Aorta (tissue), 5 donors: ENCODE measurements at regions of chr15 and their contacts with region 1.

Region 1: DNA sequence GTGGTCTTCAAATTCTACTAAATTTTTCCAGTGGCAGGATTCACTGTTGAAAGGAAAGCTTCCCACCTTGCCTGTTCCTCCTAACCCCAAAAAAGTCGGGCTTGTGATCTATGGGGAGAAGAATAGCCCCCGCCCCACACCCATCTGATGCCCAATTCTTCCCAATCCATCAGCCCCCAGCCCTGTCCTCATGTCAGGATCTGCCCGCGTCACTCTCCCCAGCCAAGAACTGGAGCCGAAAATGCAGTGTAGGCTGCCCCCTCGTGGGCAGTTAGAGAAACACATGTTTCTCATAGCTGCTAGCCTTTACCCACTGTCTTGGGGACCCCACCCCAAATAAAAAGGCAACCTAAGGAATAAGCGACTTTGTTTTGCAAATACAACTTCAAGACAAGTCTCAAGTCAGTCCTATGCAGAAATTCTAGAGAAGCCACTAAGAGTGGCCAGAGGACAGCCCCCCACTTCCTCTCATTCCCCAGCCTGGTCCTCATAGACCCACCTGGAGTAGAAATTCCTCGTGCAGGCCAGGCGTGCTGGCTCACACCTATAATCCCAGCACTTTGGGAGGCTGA is 13.0 kb upstream of the CSK start:
- DNase-seq: peak; percentile 69 to 87
- ATAC-seq: peak; percentile 78
- H3K4me3 ChIP-seq: no peak overlapping the region
- H3K27ac ChIP-seq: no peak overlapping the region
- H3K4me1 ChIP-seq: no peaks in the 10 kb centered on the region
- H3K27me3 ChIP-seq: no peaks in the 10 kb centered on the region

Region 2: DNA sequence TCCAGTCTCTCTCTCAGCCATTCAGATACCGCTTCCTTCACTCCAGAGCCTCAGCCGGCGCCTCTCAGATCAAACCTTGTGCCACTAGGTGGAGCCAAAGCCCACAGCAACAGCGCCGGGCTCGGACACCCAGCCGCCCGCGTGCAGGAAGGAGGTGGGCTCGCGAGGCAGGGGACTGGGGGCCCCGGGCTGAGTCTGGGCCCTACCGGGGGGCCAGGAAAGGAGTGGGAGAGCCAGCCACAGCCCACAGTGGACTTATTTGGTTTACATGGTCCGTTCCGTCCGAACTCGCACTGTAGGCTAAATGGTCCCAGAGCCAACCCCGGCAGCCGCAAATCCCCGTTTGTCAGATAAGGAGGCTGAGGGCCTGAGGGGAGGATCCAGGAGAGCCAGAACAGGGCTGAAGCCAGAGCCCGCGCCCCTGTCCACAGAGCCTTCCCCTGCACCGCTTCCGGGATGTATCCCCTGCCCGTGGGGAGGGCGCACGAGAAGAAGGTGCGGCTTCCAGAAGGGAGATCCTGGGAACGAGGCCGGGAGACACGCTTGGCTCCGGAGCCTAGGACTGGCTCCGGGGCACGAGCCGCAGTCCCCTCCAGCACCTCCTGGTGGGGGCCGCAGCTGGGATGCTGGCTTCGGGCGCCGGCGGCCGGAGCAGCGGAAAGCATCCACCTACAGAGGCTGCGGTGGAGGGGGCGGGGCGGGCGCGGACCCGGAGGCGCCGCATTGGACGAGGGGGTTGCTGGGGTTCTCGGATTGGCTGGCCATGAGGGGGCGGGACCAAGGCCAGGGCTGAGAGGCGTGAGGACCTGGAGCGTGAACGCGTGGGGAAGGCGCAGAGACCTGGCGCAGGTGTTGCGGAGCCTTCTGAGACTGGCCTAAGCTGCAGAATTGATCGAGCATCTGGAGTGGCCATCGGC is 394.9 kb before region 1 on chr15:
- intact Hi-C with region 1: loop called (anchors 2 to 10 kb)
- DNase-seq: peak; percentile 95 to 97
- ATAC-seq: peak; percentile 98
- H3K4me3 ChIP-seq: peak overlapping the region in 1 of 2 donors; percentile 29
- H3K27ac ChIP-seq: no peak overlapping the region
- H3K4me1 ChIP-seq: no peaks in the 10 kb centered on the region
- H3K27me3 ChIP-seq: no peaks in the 10 kb centered on the region

Region 3: DNA sequence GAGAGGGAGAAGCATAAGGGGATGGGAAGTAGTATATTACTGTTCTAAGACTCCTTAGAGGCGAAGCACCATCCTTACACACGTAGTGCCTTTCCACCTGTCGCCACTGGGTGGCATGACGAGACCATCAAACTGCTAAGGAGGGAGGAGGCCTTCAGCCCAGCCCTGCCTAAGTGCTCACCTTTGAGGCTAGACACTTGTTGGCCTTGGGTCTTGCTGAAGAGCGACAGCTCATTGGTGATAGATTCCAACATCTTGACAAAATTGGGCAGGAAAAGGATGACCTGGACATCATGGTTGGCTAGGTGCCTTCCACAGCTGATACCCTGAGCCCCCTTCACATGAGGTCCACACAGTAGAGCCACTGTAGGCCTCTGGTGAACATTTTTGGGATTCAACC is 133.6 kb before region 1 on chr15:
- intact Hi-C with region 1: loop called (anchors 1 to 2 kb)
- DNase-seq: peak in 1 of 2 donors; percentile 88
- ATAC-seq: peak; percentile 75
- H3K4me3 ChIP-seq: no peak overlapping the region
- H3K27ac ChIP-seq: no peak overlapping the region
- H3K4me1 ChIP-seq: no peaks in the 10 kb centered on the region
- H3K27me3 ChIP-seq: no peaks in the 10 kb centered on the region

Region 4: GRCh38 chr15:74716644-74717043 is 52.2 kb before region 1 on chr15:
- intact Hi-C with region 1: no loop called
- DNase-seq: no peak
- ATAC-seq: no peak
- H3K4me3 ChIP-seq: no peak overlapping the region
- H3K27ac ChIP-seq: no peak overlapping the region
- H3K4me1 ChIP-seq: no peaks in the 10 kb centered on the region
- H3K27me3 ChIP-seq: no peaks in the 10 kb centered on the region

Region 5: DNA sequence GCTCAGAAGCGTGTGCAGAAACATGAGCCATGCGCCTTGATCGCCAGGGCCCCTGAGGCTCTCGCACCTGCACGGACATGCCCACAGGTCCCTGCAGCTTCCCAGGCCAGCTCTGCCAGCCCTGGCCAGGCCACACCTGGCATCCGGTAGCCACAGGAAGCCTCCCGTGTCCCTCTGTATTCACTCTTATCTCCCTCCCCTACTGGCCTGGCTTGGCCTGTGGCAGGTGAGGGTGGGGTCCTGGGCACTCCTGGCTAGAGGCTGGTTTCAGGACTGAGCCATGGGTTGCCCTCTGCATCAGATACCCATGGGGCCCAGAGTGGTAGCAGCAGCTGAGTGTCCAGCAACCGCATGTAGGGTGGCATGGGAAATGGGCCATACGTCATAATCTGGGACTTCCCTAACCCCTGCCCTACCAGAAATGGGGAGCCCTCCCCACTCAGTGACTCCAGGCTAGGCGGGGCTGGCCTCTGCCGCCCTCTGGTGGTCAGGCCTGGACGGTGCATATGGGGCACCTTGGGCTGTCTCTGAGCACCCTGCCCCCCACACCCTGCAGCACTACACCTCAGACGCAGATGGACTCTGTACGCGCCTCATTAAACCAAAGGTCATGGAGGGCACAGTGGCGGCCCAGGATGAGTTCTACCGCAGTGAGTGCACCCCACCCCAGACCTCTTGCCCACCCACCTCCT is 31.1 kb after region 1 on chr15:
- intact Hi-C with region 1: loop called (anchors 5 kb)
- DNase-seq: peak; percentile 86 to 92
- ATAC-seq: peak; percentile 89
- H3K4me3 ChIP-seq: no peak overlapping the region
- H3K27ac ChIP-seq: no peak overlapping the region
- H3K4me1 ChIP-seq: no peaks in the 10 kb centered on the region
- H3K27me3 ChIP-seq: no peaks in the 10 kb centered on the region

Region 6: DNA sequence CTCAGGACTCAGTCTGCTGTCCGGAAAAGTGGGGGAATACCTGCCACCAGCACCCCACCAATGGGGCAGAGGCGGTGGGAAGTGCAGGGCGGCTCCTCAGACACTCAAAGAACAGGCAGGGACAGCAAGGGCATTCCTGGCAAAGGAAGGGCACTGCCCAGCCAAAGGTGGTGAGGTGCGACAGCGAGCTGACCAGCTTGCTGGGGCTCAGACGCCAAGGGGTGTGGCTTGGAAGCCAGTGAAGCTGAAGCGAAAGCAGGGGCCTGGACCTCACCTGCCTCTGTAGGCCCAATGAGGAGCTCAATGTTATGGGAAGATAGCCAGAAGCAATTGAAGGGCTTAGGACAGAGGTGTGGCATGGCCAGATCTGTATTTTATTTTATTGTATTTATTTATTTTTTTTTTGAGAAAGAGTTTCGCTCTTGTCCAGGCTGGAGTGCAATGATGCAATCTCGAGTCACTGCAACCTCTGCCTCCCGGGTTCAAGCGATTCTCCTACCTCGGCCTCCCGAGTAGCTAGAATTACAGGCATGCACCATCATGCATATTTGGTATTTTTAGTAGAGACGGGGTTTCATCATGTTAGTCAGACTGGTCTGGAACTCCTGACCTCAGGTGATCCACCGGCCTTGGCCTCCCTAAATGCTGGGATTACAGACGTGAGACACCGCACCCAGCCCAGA is 39.4 kb after region 1 on chr15:
- intact Hi-C with region 1: loop called (anchors 5 kb)
- DNase-seq: no peak
- ATAC-seq: no peak
- H3K4me3 ChIP-seq: no peak overlapping the region
- H3K27ac ChIP-seq: no peak overlapping the region
- H3K4me1 ChIP-seq: no peaks in the 10 kb centered on the region
- H3K27me3 ChIP-seq: no peaks in the 10 kb centered on the region

Region 7: GRCh38 chr15:74857082-74857655 is 88.3 kb after region 1 on chr15:
- intact Hi-C with region 1: no loop called
- DNase-seq: no peak
- ATAC-seq: no peak
- H3K4me3 ChIP-seq: no peak overlapping the region
- H3K27ac ChIP-seq: no peak overlapping the region
- H3K4me1 ChIP-seq: no peaks in the 10 kb centered on the region
- H3K27me3 ChIP-seq: no peaks in the 10 kb centered on the region

Region 8: DNA sequence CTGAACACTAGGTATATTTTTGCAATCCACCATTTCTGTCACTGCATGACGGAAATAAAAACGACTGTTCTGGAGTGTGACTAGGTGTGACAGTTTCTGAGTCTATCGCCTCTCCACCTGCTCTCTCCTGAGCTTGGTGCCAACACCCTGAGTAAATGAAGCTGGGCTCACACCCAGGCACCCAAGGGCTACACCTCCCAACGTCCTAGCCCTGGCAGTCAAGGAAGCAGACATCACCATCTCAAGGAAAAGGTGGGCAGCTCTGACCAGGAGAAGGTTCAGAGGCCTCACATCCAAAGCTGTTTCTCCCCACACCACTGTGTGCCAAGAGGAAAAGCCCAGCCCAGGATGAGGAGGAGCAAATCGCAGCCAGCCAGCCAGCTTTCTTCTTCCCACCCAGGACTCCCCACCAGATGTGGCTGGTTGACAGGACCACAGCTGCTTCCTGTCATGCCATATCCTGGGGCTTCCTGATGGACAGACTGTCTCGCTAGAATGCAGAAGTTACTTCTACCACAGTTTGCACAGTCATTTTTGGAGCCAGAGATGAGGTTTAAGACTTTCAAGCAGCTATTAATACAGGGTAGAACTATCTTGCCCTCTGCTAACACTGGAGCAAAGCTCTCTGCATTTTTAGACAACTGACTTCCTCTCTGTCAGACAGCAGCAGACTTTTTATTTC is 101.0 kb after region 1 on chr15:
- intact Hi-C with region 1: no loop called
- DNase-seq: peak in 1 of 2 donors; percentile 87
- ATAC-seq: no peak
- H3K4me3 ChIP-seq: no peak overlapping the region
- H3K27ac ChIP-seq: peak overlapping the region in 1 of 2 donors; percentile 77
- H3K4me1 ChIP-seq: peaks cover 0 to 2% of the 10 kb centered on the region in 2 donors
- H3K27me3 ChIP-seq: no peaks in the 10 kb centered on the region

Region 9: GRCh38 chr15:74897300-74897701 is 128.4 kb after region 1 on chr15:
- intact Hi-C with region 1: loop called in 1 of 2 experiments (anchors 5 kb)
- DNase-seq: no peak
- ATAC-seq: no peak
- H3K4me3 ChIP-seq: no peak overlapping the region
- H3K27ac ChIP-seq: no peak overlapping the region
- H3K4me1 ChIP-seq: no peaks in the 10 kb centered on the region
- H3K27me3 ChIP-seq: no peaks in the 10 kb centered on the region

Region 10: GRCh38 chr15:74950078-74951000 is 181.5 kb after region 1 on chr15:
- intact Hi-C with region 1: loop called (anchors 2 to 5 kb)
- DNase-seq: peak; percentile 76 to 81
- ATAC-seq: peak; percentile 86
- H3K4me3 ChIP-seq: no peak overlapping the region
- H3K27ac ChIP-seq: no peak overlapping the region
- H3K4me1 ChIP-seq: no peaks in the 10 kb centered on the region
- H3K27me3 ChIP-seq: no peaks in the 10 kb centered on the region

Region 11: DNA sequence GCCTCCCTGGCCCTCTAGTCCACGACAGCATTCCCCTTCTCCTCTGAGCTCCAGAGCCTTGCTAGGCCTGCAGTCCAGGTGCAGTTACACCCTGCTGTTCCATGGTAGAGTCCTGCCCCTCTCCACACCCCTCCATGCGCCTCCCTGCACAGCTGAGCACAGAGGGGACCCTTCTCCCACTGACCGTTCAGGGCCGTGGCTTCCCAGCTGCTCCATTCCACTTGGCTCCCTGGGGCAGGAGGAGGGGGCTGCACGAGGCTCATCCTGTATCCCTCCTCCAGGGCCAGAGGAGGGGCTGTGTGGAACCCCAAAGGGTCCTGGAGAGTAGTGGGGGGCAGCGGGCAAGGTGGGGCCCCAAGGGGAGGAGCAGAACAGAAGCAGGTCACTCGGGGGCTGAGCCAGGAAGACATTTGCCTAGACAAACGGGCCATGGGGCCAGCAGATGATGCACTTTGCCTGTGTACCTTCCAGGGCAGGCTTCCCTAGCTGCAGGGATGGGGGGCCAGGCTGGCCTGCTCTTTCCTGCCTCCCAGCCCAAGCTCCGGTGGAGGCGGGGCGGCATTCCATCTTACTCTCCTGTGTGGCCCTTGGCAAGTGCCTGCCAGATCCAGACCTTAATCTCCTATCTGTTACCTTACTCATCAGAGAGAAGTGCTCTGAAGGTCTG is 468.6 kb after region 1 on chr15:
- intact Hi-C with region 1: no loop called
- DNase-seq: no peak
- ATAC-seq: no peak
- H3K4me3 ChIP-seq: no peak overlapping the region
- H3K27ac ChIP-seq: no peak overlapping the region
- H3K4me1 ChIP-seq: no peaks in the 10 kb centered on the region
- H3K27me3 ChIP-seq: no peaks in the 10 kb centered on the region